BJ (cell line): ENCODE measurements at regions of chr1 and their contacts with region 1.

Region 1: DNA sequence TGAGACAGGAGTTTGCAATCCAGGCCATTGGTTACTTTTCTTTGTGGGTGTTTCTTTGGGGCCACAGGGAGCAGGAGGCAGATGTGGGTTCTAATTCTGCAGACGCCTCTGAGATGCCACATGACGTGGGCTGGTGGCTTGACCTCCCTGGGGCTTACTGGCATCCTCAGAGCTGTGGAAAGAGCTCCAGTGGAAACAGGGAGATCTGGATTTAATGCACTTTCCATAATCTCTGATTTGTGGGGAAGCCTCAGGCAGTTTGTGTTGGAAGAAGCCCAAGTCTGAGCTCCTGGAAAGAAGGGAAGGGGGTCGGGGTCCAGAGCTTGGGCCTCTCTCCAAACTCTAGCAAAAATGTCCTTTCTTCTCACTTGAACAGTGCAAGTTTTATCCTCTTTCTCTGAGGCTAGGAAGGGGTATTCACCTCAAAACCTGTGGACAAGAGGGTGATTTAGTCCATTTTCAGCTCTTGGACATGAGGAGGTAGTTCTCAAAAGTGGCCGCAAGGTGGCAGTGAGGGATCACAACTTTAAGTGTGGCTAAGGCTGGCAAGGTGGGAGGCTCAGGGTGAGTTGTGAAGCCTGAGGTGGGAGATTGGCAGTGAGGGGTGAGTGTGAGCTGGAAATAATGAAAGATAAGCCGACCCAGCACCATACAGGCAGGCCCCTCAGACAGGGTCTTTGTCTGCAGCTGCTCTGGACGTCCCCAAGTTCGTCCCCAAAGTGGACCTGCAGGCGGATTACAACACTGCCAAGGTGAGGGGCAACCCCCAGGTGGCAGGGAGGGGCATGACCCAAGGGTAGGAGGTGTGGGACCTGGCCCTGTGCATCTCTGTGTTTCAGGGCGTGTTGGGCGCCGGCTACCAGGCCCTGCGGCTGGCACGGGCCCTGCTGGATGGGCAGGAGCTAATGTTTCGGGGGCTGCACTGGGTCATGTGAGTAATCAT is 9.2 kb downstream of the IKBKE start:
- DNase-seq: no peak
- H3K4me3 ChIP-seq: no peak overlapping the region
- H3K27me3 ChIP-seq: no peaks in the 10 kb centered on the region
- CTCF ChIP-seq: peak; percentile 81

Region 2: DNA sequence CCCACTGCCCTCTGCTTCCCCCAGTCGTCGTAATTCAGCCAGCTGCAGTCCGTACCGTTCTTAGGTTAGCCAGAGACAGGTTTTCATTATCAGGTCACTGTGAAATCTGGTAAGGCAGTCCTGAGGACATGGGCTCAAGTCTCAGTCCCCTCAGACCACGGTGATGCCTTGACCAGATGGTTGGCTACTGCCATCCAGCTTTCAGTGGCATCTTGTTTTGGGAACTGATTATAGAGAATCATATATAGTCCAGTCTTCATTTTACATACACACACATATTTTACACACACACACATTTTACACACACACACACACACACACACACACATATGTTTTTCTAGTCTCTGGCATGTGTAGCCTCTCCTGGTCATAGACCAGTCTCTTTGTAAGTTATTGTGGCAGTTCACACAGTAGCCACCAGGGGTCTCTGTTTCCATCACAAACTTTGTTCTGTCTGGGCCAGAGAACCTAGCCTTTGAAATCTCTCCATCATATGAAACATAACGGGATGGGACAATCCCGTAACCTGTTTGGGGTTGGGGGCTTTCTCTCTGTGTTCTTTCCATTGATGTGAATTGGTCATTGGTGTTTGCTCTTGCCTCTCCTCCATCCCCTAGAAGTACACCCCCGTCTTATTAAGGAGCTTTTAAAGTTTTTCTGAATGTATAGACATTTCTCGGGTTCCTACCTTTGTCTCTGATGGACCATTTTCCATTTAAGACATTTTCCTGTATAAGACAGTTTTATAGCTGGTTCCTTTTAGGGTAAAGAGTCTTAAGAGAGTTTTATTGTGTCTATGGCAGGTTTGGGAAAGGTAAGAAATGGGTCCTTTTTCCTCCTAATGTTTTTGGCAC is 17.6 kb before region 1 on chr1:
- CTCF ChIA-PET with region 1: interaction called, 77 read pairs
- POLR2A ChIA-PET with region 1: no interaction called
- DNase-seq: no peak
- H3K4me3 ChIP-seq: no peak overlapping the region
- H3K27me3 ChIP-seq: no peaks in the 10 kb centered on the region
- CTCF ChIP-seq: peak; percentile 84

Region 3: GRCh38 chr1:206489980-206490770 is 10.7 kb after region 1 on chr1:
- CTCF ChIA-PET with region 1: interaction called, 49 read pairs
- POLR2A ChIA-PET with region 1: no interaction called
- DNase-seq: no peak
- H3K4me3 ChIP-seq: no peak overlapping the region
- H3K27me3 ChIP-seq: no peaks in the 10 kb centered on the region; the same call in 1 of the 2 replicates
- CTCF ChIP-seq: peak; percentile 98

Region 4: DNA sequence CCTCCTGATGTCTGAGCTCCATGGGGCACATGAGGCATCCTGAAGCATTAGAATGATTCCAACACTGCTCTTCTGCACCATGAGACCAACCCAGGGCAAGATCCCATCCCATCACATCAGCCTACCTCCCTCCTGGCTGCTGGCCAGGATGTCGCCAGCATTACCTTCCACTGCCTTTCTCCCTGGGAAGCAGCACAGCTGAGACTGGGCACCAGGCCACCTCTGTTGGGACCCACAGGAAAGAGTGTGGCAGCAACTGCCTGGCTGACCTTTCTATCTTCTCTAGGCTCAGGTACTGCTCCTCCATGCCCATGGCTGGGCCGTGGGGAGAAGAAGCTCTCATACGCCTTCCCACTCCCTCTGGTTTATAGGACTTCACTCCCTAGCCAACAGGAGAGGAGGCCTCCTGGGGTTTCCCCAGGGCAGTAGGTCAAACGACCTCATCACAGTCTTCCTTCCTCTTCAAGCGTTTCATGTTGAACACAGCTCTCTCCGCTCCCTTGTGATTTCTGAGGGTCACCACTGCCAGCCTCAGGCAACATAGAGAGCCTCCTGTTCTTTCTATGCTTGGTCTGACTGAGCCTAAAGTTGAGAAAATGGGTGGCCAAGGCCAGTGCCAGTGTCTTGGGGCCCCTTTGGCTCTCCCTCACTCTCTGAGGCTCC is 16.8 kb after region 1 on chr1:
- CTCF ChIA-PET with region 1: interaction called, 49 read pairs
- POLR2A ChIA-PET with region 1: no interaction called
- DNase-seq: no peak
- H3K4me3 ChIP-seq: no peak overlapping the region
- H3K27me3 ChIP-seq: no peaks in the 10 kb centered on the region
- CTCF ChIP-seq: no peak

Region 5: DNA sequence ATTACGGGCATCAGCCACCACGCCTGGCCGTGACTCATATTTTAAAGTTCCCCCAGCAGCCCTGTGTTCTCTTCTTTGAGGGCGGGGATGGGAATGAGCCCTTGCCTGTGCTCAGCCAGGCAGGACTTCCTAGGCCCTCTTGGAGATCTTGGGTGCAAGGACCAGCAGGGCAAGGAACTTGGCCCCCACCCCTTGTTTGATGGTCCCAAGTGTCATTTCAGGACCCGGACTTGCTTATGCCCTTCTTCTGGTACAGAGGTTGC is 37.2 kb after region 1 on chr1:
- CTCF ChIA-PET with region 1: no interaction called
- POLR2A ChIA-PET with region 1: no interaction called
- DNase-seq: no peak
- H3K4me3 ChIP-seq: no peak overlapping the region
- H3K27me3 ChIP-seq: no peaks in the 10 kb centered on the region; the same call in 1 of the 2 replicates
- CTCF ChIP-seq: no peak